Aorta (tissue), 5 donors: ENCODE measurements at regions of chr5 and their contacts with region 1.

Region 1: DNA sequence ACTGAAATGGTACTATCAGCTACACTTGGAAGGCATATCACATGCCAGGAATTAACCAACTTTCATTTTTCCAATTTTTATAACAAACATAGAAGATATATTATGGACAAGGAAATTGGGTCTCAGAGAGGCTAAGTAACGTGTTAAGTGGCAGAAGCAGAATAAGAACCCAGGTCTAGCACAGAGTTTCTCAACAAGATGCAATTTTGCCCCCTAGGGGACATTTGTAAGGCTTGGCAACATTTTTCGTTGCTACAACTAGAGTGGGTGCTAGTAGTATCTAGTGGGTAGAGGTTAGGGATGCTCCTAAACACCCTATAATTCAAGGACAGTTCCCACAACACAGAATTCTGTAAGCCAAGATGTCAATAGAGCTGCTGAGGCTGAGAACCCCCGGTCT is 180.6 kb downstream of the SNCAIP start:
- DNase-seq: no peak
- ATAC-seq: no peak
- H3K4me3 ChIP-seq: no peak overlapping the region
- H3K27ac ChIP-seq: no peak overlapping the region
- H3K4me1 ChIP-seq: peaks cover 0 to 1% of the 10 kb centered on the region in 2 donors
- H3K27me3 ChIP-seq: no peaks in the 10 kb centered on the region

Region 2: DNA sequence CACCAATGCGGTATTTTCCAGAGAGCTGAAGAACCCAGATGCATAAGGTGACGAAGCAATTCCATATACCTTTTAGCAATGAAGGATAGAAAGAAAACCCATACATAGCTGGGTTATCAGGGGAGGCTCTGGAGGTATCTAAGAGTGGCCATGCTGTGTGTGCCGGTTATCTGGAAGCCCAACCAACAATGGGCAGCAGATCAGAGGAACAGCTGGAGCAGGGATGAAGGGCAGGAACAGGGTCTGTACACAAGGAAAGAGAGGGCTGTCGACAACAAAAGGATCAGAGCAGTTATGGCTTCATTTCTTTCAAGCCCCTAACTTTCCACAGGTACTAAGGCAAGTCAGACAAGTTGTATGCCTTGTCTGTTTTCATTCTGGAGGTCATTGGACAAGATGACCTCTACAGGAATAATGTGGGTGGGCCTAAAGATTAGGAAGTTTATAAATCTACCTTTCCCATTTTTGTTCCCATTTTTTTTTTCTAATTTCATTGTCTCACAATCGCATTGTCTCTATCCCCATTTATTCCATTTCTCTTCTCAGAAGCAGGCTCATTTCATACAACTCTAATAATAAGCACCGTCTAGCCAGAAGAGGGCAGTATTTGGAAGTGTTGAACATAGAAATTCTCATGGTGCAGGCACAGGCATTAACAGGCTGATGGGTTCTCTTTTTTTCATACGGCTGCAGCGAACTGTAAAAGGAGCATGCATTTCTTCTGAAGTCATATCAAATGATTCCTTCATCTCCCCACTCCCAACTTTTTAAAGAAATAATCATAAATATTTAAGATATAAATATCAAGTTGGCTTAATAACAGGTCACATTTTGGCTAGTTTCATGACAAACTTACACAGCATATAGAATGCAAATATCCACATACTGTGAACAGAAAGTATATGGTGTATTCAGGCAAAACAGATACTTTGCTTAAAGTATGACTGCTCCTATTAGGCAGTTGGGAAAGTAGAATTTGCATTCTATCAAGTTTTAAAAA is 299.9 kb before region 1 on chr5:
- intact Hi-C with region 1: loop called (anchors 2 to 5 kb)
- DNase-seq: no peak
- ATAC-seq: peak; percentile 68
- H3K4me3 ChIP-seq: no peak overlapping the region
- H3K27ac ChIP-seq: no peak overlapping the region
- H3K4me1 ChIP-seq: no peaks in the 10 kb centered on the region
- H3K27me3 ChIP-seq: no peaks in the 10 kb centered on the region

Region 3: DNA sequence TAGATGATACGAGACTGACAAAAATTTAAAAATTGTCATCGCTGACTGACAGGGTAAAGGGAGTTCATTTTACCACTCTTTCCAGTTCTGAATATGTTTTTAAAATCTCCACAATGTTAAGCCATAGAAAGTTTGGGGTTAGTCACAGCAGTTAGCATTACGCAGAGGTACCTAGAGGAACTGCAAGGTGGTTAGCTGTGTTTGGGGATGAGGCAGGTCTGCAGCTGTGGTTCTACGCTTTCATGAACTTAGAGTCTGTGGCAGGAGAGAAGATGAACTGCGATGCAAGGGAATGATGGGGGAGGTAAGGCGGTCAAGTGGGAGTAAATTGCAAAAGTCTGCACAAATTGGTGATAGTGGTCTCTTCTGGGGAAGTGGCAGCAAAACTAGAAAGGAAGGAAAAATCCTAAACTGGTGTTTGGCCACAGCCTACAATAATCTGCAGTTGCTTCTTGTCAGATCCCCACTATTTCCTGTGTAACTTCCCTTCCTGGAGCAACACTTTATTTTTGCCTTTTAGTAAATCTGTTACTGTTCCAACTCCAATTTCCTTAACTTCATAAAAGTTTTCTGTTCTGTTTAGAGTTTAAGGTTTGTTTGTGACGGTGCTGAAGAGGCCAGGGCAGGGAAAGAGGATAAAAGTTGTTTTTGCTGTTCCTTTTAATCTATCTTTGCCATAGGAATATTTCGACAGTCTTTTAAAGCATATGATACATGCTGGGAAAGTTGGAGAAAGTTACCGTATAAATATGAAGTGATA is 243.6 kb after region 1 on chr5:
- intact Hi-C with region 1: no loop called
- DNase-seq: no peak
- ATAC-seq: no peak
- H3K4me3 ChIP-seq: no peak overlapping the region
- H3K27ac ChIP-seq: no peak overlapping the region
- H3K4me1 ChIP-seq: no peaks in the 10 kb centered on the region
- H3K27me3 ChIP-seq: no peaks in the 10 kb centered on the region

Region 4: GRCh38 chr5:122967625-122968024 is 475.0 kb after region 1 on chr5:
- intact Hi-C with region 1: no loop called
- DNase-seq: no peak
- ATAC-seq: no peak
- H3K4me3 ChIP-seq: no peak overlapping the region
- H3K27ac ChIP-seq: no peak overlapping the region
- H3K4me1 ChIP-seq: no peaks in the 10 kb centered on the region
- H3K27me3 ChIP-seq: no peaks in the 10 kb centered on the region